ENCODE measurements at regions of chr1 and their contacts with region 1.

Region 1: DNA sequence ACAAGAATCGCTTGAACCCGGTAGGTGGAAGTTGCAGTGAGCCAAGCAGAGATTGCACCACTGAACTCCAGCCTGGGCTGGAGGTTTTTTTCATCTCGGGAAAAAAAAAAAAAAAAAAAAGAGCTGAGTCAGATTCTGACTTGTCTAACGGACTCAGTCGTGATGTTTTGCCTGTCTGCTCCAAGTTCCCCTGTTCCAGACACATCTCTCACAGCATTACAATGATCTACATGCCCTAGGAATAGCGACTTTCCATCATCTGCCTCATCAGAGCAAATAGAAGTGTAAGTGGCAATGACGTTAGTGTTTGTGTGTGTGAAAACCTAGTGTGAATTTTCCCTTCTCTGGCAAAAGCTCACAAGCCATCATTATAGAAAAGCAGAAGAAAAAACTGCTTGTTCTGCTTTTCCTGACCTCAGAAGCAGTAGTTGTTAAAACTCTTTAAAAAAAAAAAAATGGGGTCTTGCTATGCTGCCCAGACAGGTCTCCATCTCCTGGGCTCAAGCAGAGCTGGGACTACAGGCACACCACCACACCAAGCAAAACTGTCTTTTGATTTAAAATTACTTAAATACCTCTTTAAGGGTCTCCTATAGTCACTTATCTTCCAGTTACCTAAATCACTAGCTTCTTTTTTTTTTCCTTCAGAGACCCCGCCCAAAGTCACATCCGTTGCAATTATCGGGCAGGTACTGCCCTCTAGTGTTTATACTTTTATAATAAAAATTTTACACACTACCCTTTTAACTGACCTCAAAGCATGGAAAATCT is 37.3 kb downstream of the PLEKHO1 start:
- DNase-seq: no peak
- H3K4me3 Mint-ChIP-seq: peak overlapping the region; percentile 12
- H3K27ac Mint-ChIP-seq: peak overlapping the region; percentile 76
- H3K4me1 Mint-ChIP-seq: peaks cover 14% of the 10 kb centered on the region
- H3K27me3 Mint-ChIP-seq: peaks cover 12% of the 10 kb centered on the region

Region 2: DNA sequence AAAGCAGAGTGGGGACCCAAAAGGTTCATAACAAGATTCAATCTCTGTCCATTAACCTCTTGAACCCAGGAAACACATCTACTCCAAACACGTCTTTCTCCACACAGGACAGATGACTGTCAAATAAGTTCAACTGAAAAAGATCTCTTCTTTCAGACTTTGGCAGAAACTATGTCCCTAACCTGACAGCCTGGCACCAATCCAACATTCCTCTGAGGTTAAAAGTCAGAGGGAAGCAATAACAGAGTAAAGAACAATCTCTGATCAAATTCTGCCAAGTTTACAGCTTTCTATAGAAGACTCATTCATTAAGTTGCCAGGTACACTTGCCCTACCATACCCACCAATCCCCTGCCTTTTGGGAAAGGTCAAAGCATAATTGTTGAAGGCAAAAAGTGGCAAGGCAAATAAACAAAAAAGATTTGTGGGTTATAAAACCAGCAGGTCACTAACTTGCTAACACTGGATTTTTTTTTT is 208.4 kb before region 1 on chr1:
- intact Hi-C with region 1: no loop called
- DNase-seq: no peak
- H3K4me3 Mint-ChIP-seq: no peak overlapping the region
- H3K27ac Mint-ChIP-seq: no peak overlapping the region
- H3K4me1 Mint-ChIP-seq: peaks cover 40% of the 10 kb centered on the region
- H3K27me3 Mint-ChIP-seq: no peaks in the 10 kb centered on the region

Region 3: GRCh38 chr1:150072959-150073358 is 114.0 kb before region 1 on chr1:
- intact Hi-C with region 1: loop called (anchors 1 kb)
- DNase-seq: no peak
- H3K4me3 Mint-ChIP-seq: no peak overlapping the region
- H3K27ac Mint-ChIP-seq: no peak overlapping the region
- H3K4me1 Mint-ChIP-seq: peaks cover 20% of the 10 kb centered on the region
- H3K27me3 Mint-ChIP-seq: no peaks in the 10 kb centered on the region

Region 4: GRCh38 chr1:150213170-150214098 is 26.5 kb after region 1 on chr1:
- intact Hi-C with region 1: loop called (anchors 2 kb)
- DNase-seq: peak; percentile 87
- H3K4me3 Mint-ChIP-seq: peak overlapping the region; percentile 90
- H3K27ac Mint-ChIP-seq: peak overlapping the region; percentile 94
- H3K4me1 Mint-ChIP-seq: peaks cover 19% of the 10 kb centered on the region
- H3K27me3 Mint-ChIP-seq: peaks cover 2% of the 10 kb centered on the region